ENCODE measurements at regions of chr10 and their contacts with region 1.

Region 1: GRCh38 chr10:17599089-17599488 is 18.1 kb downstream of the HACD1 start:
- DNase-seq: peak in 1 of 2 donors; percentile 38
- ATAC-seq: peak; percentile 76 to 90 (median 85)
- H3K4me3 ChIP-seq: no peak overlapping the region
- H3K4me3 Mint-ChIP-seq: no peak overlapping the region
- H3K27ac ChIP-seq: no peak overlapping the region
- H3K27ac Mint-ChIP-seq: no peak overlapping the region
- H3K4me1 ChIP-seq: no peaks in the 10 kb centered on the region
- H3K4me1 Mint-ChIP-seq: peaks cover 5 to 11% of the 10 kb centered on the region in 2 donors
- H3K27me3 ChIP-seq: no peaks in the 10 kb centered on the region
- H3K27me3 Mint-ChIP-seq: no peaks in the 10 kb centered on the region
- CTCF ChIP-seq: peak; percentile 56

Region 2: DNA sequence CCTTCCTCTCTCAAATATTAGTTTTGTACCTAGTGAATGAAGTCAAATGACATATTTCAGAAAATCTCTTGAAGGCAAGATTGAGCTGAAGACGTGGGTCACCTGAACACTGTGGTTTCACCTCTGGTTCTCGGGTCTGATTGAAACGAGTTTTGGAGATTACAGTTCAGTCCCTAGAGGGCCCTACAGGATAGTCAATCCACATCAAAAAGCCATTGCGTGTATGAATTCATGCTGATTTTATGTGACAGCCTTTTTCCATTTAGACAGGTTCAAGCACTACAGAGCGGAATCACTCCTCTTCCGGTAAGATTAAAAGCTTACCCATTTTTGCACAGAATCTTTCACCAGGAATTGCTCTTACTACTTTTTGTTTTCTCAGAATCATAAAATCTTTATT is 308.9 kb before region 1 on chr10:
- intact Hi-C with region 1: loop called (anchors 1 kb)
- DNase-seq: peak in 1 of 2 donors; percentile 55
- ATAC-seq: peak in 2 of 3 donors; percentile 49 to 54
- H3K4me3 ChIP-seq: no peak overlapping the region
- H3K4me3 Mint-ChIP-seq: no peak overlapping the region
- H3K27ac ChIP-seq: no peak overlapping the region
- H3K27ac Mint-ChIP-seq: no peak overlapping the region
- H3K4me1 ChIP-seq: no peaks in the 10 kb centered on the region
- H3K4me1 Mint-ChIP-seq: peaks cover 0 to 7% of the 10 kb centered on the region in 2 donors
- H3K27me3 ChIP-seq: no peaks in the 10 kb centered on the region
- H3K27me3 Mint-ChIP-seq: peaks cover 29 to 46% of the 10 kb centered on the region in 2 donors
- CTCF ChIP-seq: peak; percentile 22

Region 3: DNA sequence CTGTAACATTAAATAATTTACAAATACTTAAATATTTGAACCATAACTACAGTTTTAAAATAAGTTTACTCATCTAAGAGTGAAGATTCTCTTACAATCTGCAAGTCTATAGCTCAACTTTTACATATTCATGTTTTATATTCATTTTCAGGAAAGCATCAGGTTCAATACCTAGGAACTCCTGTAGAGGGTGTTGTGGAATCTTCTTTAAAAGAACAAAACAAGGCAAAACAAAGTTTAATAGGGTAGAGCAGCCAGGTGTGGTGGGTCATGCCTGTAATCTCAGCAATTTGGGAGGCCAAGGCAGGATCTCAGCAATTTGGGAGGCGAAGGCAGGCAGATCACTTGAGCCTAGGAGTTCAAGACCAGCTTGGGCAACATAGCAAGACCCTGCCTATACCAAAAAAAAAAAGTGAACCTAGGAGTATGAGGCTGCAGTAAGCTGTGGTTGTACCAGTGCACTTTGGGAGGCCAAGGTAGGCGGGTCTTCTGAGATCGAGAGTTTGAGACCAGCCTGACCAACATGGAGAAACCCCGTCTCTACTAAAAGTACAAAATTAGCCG is 189.8 kb before region 1 on chr10:
- intact Hi-C with region 1: loop called (anchors 1 kb)
- DNase-seq: peak in 1 of 2 donors; percentile 68
- ATAC-seq: peak; percentile 70 to 80 (median 75)
- H3K4me3 ChIP-seq: no peak overlapping the region
- H3K4me3 Mint-ChIP-seq: no peak overlapping the region
- H3K27ac ChIP-seq: no peak overlapping the region
- H3K27ac Mint-ChIP-seq: peak overlapping the region in 1 of 2 donors; percentile 79
- H3K4me1 ChIP-seq: peaks cover 5% of the 10 kb centered on the region
- H3K4me1 Mint-ChIP-seq: peaks cover 26 to 31% of the 10 kb centered on the region in 2 donors
- H3K27me3 ChIP-seq: no peaks in the 10 kb centered on the region
- H3K27me3 Mint-ChIP-seq: no peaks in the 10 kb centered on the region
- CTCF ChIP-seq: no peak

Region 4: DNA sequence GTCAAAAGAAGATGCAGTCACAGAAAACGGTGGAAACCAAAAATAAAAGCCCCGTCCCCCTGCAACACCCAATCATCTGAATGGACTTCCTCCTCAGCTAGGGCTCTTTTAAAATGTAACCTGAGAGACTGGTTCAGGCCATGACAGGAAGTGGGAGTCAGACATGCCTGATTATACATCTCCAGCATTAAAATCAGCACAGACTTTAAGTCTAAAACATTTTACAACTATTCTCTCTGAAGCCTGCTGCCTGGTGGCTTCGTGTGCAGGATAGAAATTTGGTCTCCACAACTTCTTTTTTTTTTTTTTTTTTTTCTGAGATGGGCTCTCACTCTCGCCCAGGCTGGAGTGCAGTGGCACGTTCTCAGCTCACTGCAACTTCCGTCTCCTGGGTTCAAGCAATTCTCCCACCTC is 12.3 kb before region 1 on chr10:
- intact Hi-C with region 1: no loop called
- DNase-seq: peak in 1 of 2 donors; percentile 5
- ATAC-seq: peak; percentile 35 to 69 (median 52)
- H3K4me3 ChIP-seq: no peak overlapping the region
- H3K4me3 Mint-ChIP-seq: peak overlapping the region; percentile 49
- H3K27ac ChIP-seq: peak overlapping the region; percentile 25
- H3K27ac Mint-ChIP-seq: peak overlapping the region; percentile 24 to 55
- H3K4me1 ChIP-seq: peaks cover 9% of the 10 kb centered on the region
- H3K4me1 Mint-ChIP-seq: peaks cover 12 to 21% of the 10 kb centered on the region in 2 donors
- H3K27me3 ChIP-seq: no peaks in the 10 kb centered on the region
- H3K27me3 Mint-ChIP-seq: peaks cover 0 to 3% of the 10 kb centered on the region in 2 donors
- CTCF ChIP-seq: no peak